Endothelial cell of umbilical vein (primary cell): ENCODE measurements at regions of chr14 and their contacts with region 1.

Region 1: GRCh38 chr14:49971156-49972130 is 78.6 kb downstream of the ARF6 start:
- DNase-seq: peak; percentile 51
- H3K4me3 ChIP-seq: no peak overlapping the region
- H3K27ac ChIP-seq: peak overlapping the region; percentile 75
- H3K4me1 ChIP-seq: peaks cover 50% of the 10 kb centered on the region
- H3K27me3 ChIP-seq: no peaks in the 10 kb centered on the region
- CTCF ChIP-seq: no peak
- POLR2A ChIP-seq: no peak

Region 2: DNA sequence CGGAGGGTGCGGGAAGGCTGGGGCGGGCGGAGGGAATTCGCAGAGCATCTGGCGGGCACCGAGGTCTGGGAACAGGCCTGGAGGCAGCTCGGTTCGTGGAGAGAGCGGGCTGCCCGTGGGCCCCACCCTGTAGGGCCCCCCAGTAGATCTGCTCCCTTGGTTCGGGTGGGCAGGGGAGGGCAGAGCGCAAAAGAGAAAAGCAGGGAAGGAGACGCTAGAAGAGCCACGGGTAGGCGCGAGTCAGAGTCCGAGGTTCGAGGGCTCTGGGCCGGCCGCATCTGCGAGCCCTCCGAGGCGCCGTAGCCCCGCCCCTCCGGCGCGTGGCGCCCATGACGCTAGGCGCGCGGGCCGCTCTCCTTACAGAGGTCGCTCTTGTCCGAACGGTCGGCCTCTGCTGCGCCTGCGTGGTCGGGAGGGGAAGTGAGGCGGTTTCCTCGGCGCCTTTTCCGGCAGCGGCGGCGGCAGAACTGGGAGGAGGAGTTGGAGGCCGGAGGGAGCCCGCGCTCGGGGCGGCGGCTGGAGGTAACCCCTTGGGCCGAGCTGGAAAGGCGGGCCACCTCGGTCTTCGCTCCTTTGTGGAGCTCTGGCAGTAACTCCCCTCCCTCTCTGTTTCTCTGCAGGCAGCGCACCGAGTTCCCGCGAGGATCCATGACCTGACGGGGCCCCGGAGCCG is 78.7 kb before region 1 on chr14 and contains the start of gene ARF6:
- CTCF ChIA-PET with region 1: interaction called, 5 read pairs
- POLR2A ChIA-PET with region 1: interaction called, 5 read pairs
- dilution Hi-C with region 1: no loop called
- intact Hi-C with region 1: loop called (anchors 2 kb)
- DNase-seq: peak; percentile 97
- H3K4me3 ChIP-seq: peak within 1 kb of the TSS; percentile 27 to 92 (median 70)
- H3K27ac ChIP-seq: peak within 1 kb of the TSS; percentile 98
- H3K4me1 ChIP-seq: peaks cover 31% of the 10 kb centered on the region
- H3K27me3 ChIP-seq: no peaks in the 10 kb centered on the region
- CTCF ChIP-seq: no peak
- POLR2A ChIP-seq: peak; percentile 91
- total RNA-seq, gene ARF6: 73.2 and 73.6 TPM in 2 replicates

Region 3: DNA sequence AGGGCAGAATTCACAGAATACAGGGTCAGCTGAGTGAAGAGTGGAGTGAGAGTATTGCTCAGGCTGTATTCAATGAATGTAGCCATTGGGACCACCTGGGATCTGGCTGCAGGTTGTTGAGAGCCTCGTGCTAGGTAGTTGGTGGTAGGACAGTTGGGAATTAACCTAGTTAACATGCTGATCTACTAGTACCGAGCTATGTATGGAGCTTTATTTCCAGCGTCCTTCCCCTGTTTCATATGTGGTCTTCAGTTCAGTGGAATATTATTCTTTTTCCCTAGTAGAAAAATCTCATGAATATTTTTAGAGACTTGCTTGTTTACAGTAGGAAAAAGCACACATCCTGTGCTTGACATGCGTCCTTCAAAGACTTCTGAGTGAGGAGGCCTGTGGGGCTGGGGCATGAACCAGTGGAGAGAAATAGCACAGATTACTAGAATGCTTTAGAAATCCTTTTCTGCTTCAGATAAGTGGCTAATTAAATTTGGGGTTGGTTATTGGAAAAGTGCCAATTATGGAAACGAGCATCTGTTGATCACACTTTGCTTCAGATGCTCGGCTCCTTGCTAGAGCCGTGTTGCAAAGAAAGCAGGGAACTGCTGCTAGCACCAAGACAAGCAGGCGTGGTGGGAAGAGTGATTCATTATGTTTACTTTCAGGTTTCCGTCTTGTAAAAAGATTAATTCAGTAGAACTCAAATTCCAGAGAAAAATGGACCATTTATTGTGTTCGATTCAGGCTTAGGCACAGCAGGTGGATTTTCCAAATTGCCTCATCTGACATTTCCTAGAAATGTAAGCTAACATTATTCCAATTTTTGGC is 24.9 kb before region 1 on chr14:
- CTCF ChIA-PET with region 1: interaction called, 10 read pairs
- POLR2A ChIA-PET with region 1: no interaction called
- dilution Hi-C with region 1: no loop called
- intact Hi-C with region 1: loop called (anchors 1 kb)
- DNase-seq: peak; percentile 86
- H3K4me3 ChIP-seq: peak overlapping the region in 1 of 3 experiments; percentile 43
- H3K27ac ChIP-seq: peak overlapping the region; percentile 44
- H3K4me1 ChIP-seq: peaks cover 26% of the 10 kb centered on the region
- H3K27me3 ChIP-seq: no peaks in the 10 kb centered on the region
- CTCF ChIP-seq: no peak
- POLR2A ChIP-seq: no peak

Region 4: DNA sequence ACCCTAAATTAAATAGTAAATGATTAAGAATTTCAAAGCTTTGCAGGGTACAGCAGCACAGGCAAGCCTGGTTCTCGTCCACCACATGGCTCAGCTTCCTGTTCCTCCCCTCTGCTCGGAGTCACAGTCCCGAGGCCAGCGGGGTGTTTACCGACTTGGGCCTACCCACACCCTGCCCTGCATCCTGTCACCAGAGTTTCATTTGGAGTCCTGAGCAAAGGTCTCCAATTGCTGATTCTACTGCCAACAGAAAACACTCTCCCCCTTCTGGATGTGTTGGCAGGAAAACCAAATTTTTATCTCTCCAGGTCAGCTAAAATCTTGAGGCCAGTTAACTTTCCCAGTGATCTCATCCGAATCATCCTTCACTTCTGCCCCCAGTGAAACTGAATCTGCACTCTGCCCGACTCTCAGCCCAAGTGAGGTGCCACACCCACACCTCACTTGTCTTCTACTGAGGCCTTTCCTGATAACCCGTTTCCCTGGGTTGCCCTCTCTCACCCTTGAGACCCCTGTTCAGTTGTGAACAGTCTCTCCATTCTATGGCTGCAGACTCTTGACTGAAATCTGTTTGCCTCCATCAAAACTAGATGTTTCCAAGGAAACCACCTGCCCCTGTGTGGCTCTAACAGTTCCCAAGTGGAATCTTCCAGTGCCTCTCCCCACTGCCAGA is 73.7 kb after region 1 on chr14:
- CTCF ChIA-PET with region 1: interaction called, 5 read pairs
- POLR2A ChIA-PET with region 1: no interaction called
- dilution Hi-C with region 1: no loop called
- intact Hi-C with region 1: loop called (anchors 1 kb)
- DNase-seq: peak; percentile 69
- H3K4me3 ChIP-seq: no peak overlapping the region
- H3K27ac ChIP-seq: no peak overlapping the region
- H3K4me1 ChIP-seq: peaks cover 35% of the 10 kb centered on the region
- H3K27me3 ChIP-seq: no peaks in the 10 kb centered on the region
- CTCF ChIP-seq: no peak
- POLR2A ChIP-seq: no peak

Region 5: GRCh38 chr14:50109342-50109741 is 137.9 kb after region 1 on chr14:
- CTCF ChIA-PET with region 1: interaction called, 10 read pairs
- POLR2A ChIA-PET with region 1: no interaction called
- dilution Hi-C with region 1: no loop called
- intact Hi-C with region 1: no loop called
- DNase-seq: peak; percentile 11
- H3K4me3 ChIP-seq: no peak overlapping the region
- H3K27ac ChIP-seq: no peak overlapping the region
- H3K4me1 ChIP-seq: no peaks in the 10 kb centered on the region
- H3K27me3 ChIP-seq: no peaks in the 10 kb centered on the region
- CTCF ChIP-seq: peak in 1 of 2 donors; percentile 23
- POLR2A ChIP-seq: no peak